ENCODE measurements at regions of chr3 and their contacts with region 1.

Region 1: DNA sequence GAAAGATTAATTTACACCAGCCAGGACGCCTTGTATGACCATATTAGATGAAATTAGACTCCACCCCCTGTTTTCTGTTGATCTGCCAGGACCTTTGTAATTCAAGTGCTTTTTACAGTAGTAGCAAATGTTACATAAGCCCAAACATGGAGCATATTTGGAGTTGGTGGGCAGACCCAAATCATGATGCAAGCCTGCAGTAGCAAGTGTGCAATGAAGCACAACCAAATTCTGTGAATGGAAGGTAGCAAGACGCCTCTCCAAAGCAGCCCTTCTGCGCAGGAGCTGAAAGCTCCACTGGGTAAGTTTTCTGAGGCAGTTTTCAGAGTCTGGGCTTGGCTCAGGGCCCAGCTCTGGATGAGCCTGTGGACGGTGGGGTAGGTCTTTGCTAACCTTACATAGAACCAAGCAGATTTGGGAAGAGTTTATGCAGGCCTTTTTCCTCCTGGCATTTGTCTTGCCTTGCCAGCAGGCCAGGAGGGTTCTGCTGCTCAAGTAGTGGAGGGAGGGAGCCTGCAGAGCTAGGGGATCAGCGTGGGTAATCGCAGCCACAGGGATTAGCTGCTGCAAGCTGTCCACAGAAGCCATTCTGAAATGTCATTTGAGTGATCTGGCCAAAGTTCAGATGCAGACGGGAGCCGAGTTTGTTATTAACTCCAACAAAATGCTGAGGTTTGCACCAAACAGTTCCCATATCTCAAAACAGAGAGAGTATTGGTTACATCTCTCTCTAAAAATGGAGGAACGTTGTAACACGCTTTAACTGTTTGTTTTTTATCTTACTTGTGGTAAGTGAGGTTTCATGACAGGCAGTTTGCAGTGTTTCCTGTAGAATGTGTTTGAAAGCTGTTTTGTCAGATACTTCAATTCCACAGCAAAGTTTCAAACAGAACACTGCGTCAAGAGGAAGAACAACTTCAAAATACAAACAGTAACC is 55.4 kb downstream of the PSMD6 start:
- DNase-seq: peak; percentile 48
- H3K4me3 Mint-ChIP-seq: peak overlapping the region; percentile 78
- H3K27ac Mint-ChIP-seq: peak overlapping the region; percentile 93
- H3K4me1 Mint-ChIP-seq: peaks cover 72% of the 10 kb centered on the region
- H3K27me3 Mint-ChIP-seq: no peaks in the 10 kb centered on the region

Region 2: GRCh38 chr3:62833531-62833930 is 1134.4 kb before region 1 on chr3:
- CTCF ChIA-PET with region 1: no interaction called
- intact Hi-C with region 1: no loop called
- DNase-seq: no peak
- H3K4me3 Mint-ChIP-seq: no peak overlapping the region
- H3K27ac Mint-ChIP-seq: no peak overlapping the region
- H3K4me1 Mint-ChIP-seq: no peaks in the 10 kb centered on the region
- H3K27me3 Mint-ChIP-seq: no peaks in the 10 kb centered on the region

Region 3: DNA sequence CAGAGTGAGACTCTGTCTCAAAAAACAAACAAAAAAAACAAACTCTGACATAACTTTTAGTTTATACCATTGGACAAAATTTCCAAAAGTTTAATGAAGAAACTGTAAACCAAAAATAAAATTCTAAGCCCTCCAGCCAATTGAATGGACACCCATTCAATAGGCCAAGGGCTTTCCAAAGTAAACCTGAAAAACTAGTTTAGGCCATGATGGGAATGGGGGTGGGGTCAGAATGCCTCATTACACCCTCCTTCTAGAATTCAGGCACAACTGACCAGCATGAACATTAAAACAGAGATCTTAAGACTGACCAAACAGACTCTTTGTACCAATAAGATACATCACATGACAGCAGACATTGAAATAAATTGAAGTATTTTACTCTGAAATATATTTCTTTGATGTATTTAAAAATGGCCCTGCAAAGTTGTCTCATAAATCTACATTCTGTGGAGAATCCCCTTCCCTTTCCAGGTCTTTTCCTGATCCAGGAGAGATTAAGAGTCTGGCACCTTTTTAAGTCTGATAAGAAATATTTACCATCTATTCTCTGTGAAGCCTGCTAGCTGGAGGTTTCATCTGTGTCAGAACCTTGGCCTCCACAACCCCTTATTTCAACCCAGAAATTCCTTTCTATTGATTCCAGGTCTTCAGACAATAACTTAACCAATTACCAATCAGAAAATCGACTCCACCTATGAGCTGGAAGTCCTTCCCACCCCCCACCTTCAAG is 120.1 kb before region 1 on chr3:
- CTCF ChIA-PET with region 1: no interaction called
- intact Hi-C with region 1: no loop called
- DNase-seq: no peak
- H3K4me3 Mint-ChIP-seq: no peak overlapping the region
- H3K27ac Mint-ChIP-seq: no peak overlapping the region
- H3K4me1 Mint-ChIP-seq: peaks cover 1% of the 10 kb centered on the region
- H3K27me3 Mint-ChIP-seq: no peaks in the 10 kb centered on the region

Region 4: GRCh38 chr3:63863148-63864007 is 104.6 kb before region 1 on chr3 and contains the starts of genes ATXN7 and THOC7:
- CTCF ChIA-PET with region 1: interaction called, 5 read pairs
- intact Hi-C with region 1: loop called (anchors 5 kb)
- DNase-seq: peak; percentile 56
- H3K4me3 Mint-ChIP-seq: peak within 1 kb of the TSS; percentile 93
- H3K27ac Mint-ChIP-seq: peak within 1 kb of the TSS; percentile 92
- H3K4me1 Mint-ChIP-seq: peaks cover 58% of the 10 kb centered on the region
- H3K27me3 Mint-ChIP-seq: no peaks in the 10 kb centered on the region
- total RNA-seq, gene ATXN7: 25.5 to 25.8 TPM
- total RNA-seq, gene THOC7: 72.8 to 77.0 TPM

Region 5: GRCh38 chr3:63911873-63912767 is 55.8 kb before region 1 on chr3 and contains the start of gene SCAANT1:
- CTCF ChIA-PET with region 1: interaction called, 3 read pairs
- intact Hi-C with region 1: loop called (anchors 1 kb)
- DNase-seq: peak; percentile 78
- H3K4me3 Mint-ChIP-seq: peak within 1 kb of the TSS; percentile 87
- H3K27ac Mint-ChIP-seq: peak within 1 kb of the TSS; percentile 93
- H3K4me1 Mint-ChIP-seq: peaks cover 38% of the 10 kb centered on the region
- H3K27me3 Mint-ChIP-seq: no peaks in the 10 kb centered on the region
- total RNA-seq, gene SCAANT1: not detected

Region 6: GRCh38 chr3:63980835-63981498 is 13.0 kb after region 1 on chr3:
- CTCF ChIA-PET with region 1: interaction called, 83 read pairs
- intact Hi-C with region 1: loop called (anchors 1 kb)
- DNase-seq: no peak
- H3K4me3 Mint-ChIP-seq: no peak overlapping the region
- H3K27ac Mint-ChIP-seq: peak overlapping the region; percentile 22
- H3K4me1 Mint-ChIP-seq: peaks cover 78% of the 10 kb centered on the region
- H3K27me3 Mint-ChIP-seq: no peaks in the 10 kb centered on the region

Region 7: GRCh38 chr3:64187065-64187959 is 219.4 kb after region 1 on chr3:
- CTCF ChIA-PET with region 1: no interaction called
- intact Hi-C with region 1: no loop called
- DNase-seq: no peak
- H3K4me3 Mint-ChIP-seq: no peak overlapping the region
- H3K27ac Mint-ChIP-seq: no peak overlapping the region
- H3K4me1 Mint-ChIP-seq: no peaks in the 10 kb centered on the region
- H3K27me3 Mint-ChIP-seq: peaks cover 3% of the 10 kb centered on the region